Naive thymus-derived CD4-positive, alpha-beta T cell (primary cell): ENCODE measurements at regions of chr9 and their contacts with region 1.

Region 1: GRCh38 chr9:33404788-33405362 is 2.5 kb upstream of the AQP7 start:
- DNase-seq: no peak
- ATAC-seq: no peak
- H3K4me3 ChIP-seq: no peak overlapping the region
- H3K4me3 Mint-ChIP-seq: no peak overlapping the region
- H3K27ac ChIP-seq: no peak overlapping the region
- H3K27ac Mint-ChIP-seq: peak overlapping the region in 8 of 9 donors; percentile 12 to 82 (median 76)
- H3K4me1 ChIP-seq: no peaks in the 10 kb centered on the region
- H3K4me1 Mint-ChIP-seq: peaks cover 4 to 14% (median 10%) of the 10 kb centered on the region in 7 donors
- H3K27me3 ChIP-seq: no peaks in the 10 kb centered on the region
- H3K27me3 Mint-ChIP-seq: peaks cover 0 to 4% (median 0%) of the 10 kb centered on the region in 5 donors

Region 2: DNA sequence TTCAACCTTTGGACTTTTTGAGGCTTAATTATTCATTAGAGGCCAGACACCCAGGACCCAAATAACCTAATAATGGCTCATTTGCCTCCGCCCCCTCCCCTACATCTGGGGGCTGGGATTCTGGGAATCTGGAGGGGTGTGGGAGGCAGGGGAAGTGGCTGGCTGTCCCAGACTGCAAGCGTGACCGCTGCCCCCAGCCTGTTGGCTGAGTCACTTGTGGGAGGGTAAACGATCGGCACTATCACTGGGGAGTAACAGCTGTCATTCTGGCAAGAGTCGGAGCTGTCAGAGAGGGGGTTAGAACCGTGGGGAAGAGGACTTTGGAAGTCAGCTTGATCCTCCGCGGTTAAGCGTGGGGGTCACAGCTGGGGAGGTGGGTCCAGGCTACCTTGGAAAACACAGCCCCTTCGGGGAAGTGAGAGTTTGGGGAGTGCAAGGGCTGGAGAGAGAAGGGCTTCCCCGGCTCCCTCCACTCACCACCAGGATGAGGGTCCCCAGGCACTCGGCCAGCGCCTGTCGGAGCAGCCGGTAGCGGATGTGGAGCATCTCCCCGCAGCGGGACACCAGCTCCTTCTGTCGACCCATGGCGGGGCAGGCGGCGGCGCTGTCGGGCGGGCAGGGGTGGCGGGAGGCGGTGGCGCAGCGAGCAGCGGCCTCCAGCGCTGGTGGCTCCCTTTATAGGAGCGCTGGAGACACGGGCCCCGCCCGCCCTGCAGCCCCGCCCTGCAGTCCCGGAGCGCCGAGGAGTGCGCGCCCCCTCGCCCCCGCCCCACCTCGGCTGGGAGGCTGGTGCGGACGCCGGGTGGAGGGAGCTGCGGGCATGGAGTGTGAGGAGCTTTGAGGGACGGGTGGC is 42.3 kb after region 1 on chr9 and contains the start of gene AQP3:
- CTCF ChIA-PET with region 1: interaction called, 134 read pairs
- POLR2A ChIA-PET with region 1: interaction called, 8 read pairs
- intact Hi-C with region 1: loop called (anchors 1 kb)
- DNase-seq: peak; percentile 59 to 77 (median 72)
- ATAC-seq: peak; percentile 79
- H3K4me3 ChIP-seq: peak within 1 kb of the TSS; percentile 86
- H3K4me3 Mint-ChIP-seq: peak within 1 kb of the TSS; percentile 89 to 98 (median 94)
- H3K27ac ChIP-seq: peak within 1 kb of the TSS; percentile 85
- H3K27ac Mint-ChIP-seq: peak within 1 kb of the TSS; percentile 81 to 97 (median 96)
- H3K4me1 ChIP-seq: peaks cover 27 to 36% of the 10 kb centered on the region in 2 donors
- H3K4me1 Mint-ChIP-seq: peaks cover 23 to 60% (median 45%) of the 10 kb centered on the region in 7 donors
- H3K27me3 ChIP-seq: no peaks in the 10 kb centered on the region
- H3K27me3 Mint-ChIP-seq: no peaks in the 10 kb centered on the region
- total RNA-seq, gene AQP3: 53.3 to 173 (median 110) TPM

Region 3: DNA sequence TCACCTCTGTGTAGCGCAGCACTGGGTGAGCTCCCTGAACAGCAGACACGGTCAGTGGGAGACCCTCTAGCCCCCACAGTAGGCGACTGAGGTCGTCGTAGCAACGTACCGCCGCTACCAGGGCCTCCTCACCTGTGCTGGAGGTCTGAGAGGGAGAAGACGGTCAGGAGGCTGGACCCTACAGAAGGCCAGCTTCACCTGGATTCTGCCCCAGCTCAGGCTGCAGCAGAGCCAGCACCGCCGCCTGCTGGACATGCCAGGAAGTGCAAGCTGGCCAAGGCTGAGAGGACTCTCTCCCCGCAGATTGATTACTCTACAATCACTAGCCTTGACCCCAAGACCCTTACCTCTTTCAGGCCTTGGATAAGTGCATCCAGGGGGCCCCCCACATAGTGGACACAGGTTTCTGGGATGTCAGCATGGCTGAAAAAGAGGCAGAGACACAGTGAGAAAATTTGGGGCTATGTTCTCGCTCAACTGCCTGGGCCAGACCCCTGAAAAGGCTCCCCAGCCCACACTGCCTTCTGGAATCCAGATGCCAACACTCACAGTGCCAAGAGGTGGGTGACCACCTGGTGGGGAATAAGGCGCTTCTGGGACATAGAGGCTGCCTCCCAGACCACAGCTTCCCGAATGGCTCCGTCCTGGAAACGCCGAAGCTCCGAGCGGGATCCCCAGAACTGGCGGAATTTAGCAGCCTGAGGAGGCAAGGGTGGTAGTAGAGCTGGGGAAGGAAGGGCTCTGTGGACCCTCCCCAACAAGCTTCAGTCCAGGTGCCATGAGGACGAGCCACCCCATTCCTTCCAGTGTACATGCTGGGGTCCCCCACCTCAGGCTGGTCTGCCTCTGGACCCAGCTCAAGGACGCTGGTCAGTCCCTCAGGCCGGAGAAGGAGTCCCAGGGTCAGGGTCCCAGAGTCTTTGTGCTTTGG is 62.0 kb after region 1 on chr9:
- CTCF ChIA-PET with region 1: interaction called, 75 read pairs
- POLR2A ChIA-PET with region 1: interaction called, 12 read pairs
- intact Hi-C with region 1: loop called (anchors 1 kb)
- DNase-seq: peak; percentile 42 to 82 (median 67)
- ATAC-seq: peak; percentile 84
- H3K4me3 ChIP-seq: no peak overlapping the region
- H3K4me3 Mint-ChIP-seq: peak overlapping the region in 1 of 10 donors; percentile 31
- H3K27ac ChIP-seq: peak overlapping the region; percentile 18
- H3K27ac Mint-ChIP-seq: peak overlapping the region in 6 of 9 donors; percentile 31 to 76 (median 43)
- H3K4me1 ChIP-seq: no peaks in the 10 kb centered on the region
- H3K4me1 Mint-ChIP-seq: peaks cover 5 to 12% (median 7%) of the 10 kb centered on the region in 7 donors
- H3K27me3 ChIP-seq: no peaks in the 10 kb centered on the region
- H3K27me3 Mint-ChIP-seq: no peaks in the 10 kb centered on the region

Region 4: DNA sequence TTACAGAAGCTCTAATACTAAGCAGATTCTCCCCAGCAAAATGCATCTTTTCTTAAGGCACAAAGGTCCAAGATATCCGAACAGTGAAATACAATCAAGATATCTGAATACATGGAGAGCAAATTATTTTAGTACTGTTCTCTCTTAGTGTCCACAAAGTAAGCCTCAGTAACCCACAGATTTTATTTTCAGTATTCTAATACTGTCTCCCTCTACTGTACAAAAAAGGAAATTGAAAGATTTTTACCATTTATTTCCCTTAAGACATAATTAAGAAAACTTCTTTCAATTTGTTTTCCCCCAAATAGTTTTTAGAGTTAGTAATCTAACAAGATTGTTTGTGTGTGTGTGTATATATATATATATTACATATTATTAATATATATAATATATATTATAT is 93.5 kb after region 1 on chr9:
- CTCF ChIA-PET with region 1: interaction called, 4 read pairs
- POLR2A ChIA-PET with region 1: no interaction called
- intact Hi-C with region 1: loop called in 1 of 2 experiments (anchors 1 kb)
- DNase-seq: peak in 1 of 9 donors; percentile 15
- ATAC-seq: no peak
- H3K4me3 ChIP-seq: no peak overlapping the region
- H3K4me3 Mint-ChIP-seq: no peak overlapping the region
- H3K27ac ChIP-seq: no peak overlapping the region
- H3K27ac Mint-ChIP-seq: no peak overlapping the region
- H3K4me1 ChIP-seq: no peaks in the 10 kb centered on the region
- H3K4me1 Mint-ChIP-seq: peaks cover 0 to 1% (median 0%) of the 10 kb centered on the region in 7 donors
- H3K27me3 ChIP-seq: no peaks in the 10 kb centered on the region
- H3K27me3 Mint-ChIP-seq: peaks cover 0 to 11% (median 0%) of the 10 kb centered on the region in 5 donors

Region 5: DNA sequence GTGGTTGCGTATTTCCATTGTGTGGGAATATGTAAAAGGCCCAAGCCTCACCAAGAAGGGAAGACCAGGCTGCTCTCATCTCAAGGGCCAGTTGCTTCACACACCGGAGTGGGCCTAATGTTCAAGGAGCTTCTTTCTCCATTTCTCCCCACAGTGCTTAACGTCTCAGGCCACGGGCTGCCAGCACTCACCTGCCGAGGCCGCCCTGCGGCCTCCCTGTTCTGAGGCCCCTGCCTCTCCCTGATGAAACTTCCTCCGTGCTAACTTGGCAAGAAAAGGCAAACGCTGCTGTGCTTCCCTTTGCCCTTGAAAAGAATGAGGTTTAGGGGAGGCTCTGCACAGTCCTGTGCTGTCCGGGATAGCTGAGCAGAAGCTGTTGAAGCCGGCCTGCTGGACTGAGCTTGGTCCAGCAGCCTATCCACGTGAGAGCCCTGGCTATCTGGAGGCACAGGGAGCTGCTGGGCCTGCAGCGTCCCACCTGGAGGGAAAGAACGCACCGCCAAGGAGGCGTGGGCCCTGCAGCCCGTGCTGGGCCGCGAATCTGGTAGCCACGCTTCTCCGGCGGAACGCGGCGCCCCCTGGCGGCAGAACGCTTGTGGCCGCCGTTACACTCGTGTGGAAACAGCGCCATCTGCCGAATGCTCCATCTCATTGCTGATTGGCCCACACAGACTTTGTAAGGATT is 316.9 kb after region 1 on chr9:
- CTCF ChIA-PET with region 1: no interaction called
- POLR2A ChIA-PET with region 1: no interaction called
- intact Hi-C with region 1: loop called (anchors 1 to 5 kb)
- DNase-seq: peak; percentile 68 to 90 (median 86)
- ATAC-seq: peak; percentile 93
- H3K4me3 ChIP-seq: no peak overlapping the region
- H3K4me3 Mint-ChIP-seq: peak overlapping the region in 1 of 10 donors; percentile 32
- H3K27ac ChIP-seq: no peak overlapping the region
- H3K27ac Mint-ChIP-seq: peak overlapping the region in 3 of 9 donors; percentile 22 to 55 (median 49)
- H3K4me1 ChIP-seq: no peaks in the 10 kb centered on the region
- H3K4me1 Mint-ChIP-seq: peaks cover 0 to 4% (median 0%) of the 10 kb centered on the region in 7 donors
- H3K27me3 ChIP-seq: no peaks in the 10 kb centered on the region
- H3K27me3 Mint-ChIP-seq: peaks cover 5 to 27% (median 13%) of the 10 kb centered on the region in 5 donors

Region 6: DNA sequence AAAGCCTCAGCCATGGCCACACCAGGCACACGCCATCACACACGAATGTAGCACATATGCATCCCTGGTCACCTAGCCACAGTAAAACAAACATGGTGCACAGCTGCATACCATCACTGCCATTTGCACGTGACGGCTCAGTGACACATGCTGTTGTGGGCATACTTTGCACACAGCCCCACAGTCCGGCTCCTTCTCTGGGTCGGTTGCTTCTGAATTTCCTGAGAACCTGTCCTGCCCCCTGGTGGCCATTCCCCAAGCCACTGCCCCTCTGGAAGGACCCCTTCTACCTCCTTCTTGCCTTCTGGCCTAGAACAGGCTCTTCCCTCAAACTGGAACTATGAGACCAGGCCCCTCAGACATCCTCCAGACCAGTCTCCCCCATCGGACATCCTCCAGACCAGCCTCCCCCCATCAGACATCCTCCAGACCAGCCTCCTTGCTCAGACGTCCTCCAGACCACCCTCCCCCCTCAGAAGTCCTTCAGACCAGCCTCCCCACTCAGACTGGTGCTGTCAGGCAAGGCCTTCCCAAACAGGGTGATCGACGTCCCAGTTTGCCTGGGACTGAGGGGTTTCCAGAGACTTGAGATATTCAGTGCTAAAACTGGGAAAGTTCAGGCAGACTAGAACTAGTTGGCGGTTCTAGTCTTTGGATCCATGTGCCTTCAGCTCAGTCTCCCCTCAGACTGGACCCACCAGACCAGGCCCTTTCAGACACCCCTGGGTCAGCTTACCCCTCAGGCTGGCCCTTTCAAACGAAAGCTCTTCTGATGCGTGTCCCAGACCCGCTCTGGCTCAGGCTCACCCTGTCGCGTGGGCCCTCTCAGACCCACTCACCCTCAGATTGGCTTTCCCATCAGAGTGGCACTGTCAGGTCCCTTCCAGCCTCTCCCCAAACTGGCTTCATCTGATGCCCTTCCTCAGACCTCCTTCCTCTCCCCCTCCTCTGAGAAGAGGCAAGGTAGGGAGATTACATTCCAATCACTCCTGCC is 1142.3 kb after region 1 on chr9:
- CTCF ChIA-PET with region 1: no interaction called
- POLR2A ChIA-PET with region 1: no interaction called
- intact Hi-C with region 1: no loop called
- DNase-seq: peak in 5 of 9 donors; percentile 21 to 47 (median 23)
- ATAC-seq: peak; percentile 58
- H3K4me3 ChIP-seq: no peak overlapping the region
- H3K4me3 Mint-ChIP-seq: peak overlapping the region in 1 of 10 donors; percentile 34
- H3K27ac ChIP-seq: no peak overlapping the region
- H3K27ac Mint-ChIP-seq: no peak overlapping the region
- H3K4me1 ChIP-seq: no peaks in the 10 kb centered on the region
- H3K4me1 Mint-ChIP-seq: peaks cover 0 to 10% (median 0%) of the 10 kb centered on the region in 7 donors
- H3K27me3 ChIP-seq: no peaks in the 10 kb centered on the region
- H3K27me3 Mint-ChIP-seq: peaks cover 7 to 34% (median 12%) of the 10 kb centered on the region in 5 donors